GM12878 (cell line): ENCODE measurements at regions of chr16 and their contacts with region 1.

Region 1: DNA sequence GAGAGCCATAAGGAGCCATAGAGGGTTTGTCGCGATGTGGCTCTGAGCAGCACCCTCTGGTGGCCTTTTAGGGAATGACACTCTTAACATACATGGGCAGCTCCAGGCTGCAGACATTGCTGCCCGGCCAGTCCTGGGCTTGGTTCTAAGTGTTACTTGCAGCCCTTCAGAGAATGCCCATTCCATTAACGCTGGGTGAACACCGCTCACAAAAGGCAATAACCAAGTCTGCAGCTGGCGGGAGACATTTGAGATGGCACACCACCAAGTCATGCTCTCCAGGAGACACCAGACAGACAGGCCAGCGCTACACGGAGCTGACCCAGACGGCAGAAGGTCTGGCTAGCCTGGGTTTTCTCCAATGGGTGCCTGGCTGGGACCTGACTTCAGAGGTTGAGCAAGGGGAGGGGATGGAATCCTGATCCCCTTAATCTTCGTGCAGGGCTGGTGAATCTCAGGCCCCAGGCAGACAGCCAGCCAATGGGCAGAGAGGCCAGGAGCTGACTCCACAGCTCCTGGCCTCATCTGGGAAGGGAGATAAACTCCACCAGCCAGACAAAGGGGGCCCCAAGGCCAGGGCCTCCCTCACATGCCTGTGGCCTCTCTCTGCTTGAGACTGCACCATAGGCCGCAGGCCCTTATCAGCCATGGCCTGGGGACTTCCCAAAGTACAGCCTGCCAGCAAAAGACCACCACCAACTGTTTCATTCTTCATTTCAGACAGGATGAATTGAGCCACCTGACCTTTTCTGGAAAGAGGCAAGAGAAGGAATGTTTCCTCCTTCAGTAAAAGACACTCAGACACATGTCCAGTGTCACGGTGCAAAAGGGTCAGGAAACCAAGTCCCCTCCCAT is 58.8 kb downstream of the ZDHHC7 start:
- DNase-seq: peak; percentile 40
- ATAC-seq: peak; percentile 94
- H3K4me3 ChIP-seq: no peak overlapping the region
- H3K27ac ChIP-seq: no peak overlapping the region
- H3K4me1 ChIP-seq: peaks cover 4% of the 10 kb centered on the region; the same call in 1 of the 2 replicates
- H3K27me3 ChIP-seq: no peaks in the 10 kb centered on the region; a peak in 1 of 4 replicates
- CTCF ChIP-seq: peak; percentile 85
- EP300 ChIP-seq: no peak
- POLR2A ChIP-seq: no peak
- RAD21 ChIP-seq: peak; percentile 58

Region 2: GRCh38 chr16:84647828-84648594 is 304.6 kb before region 1 on chr16 and contains the start of gene KLHL36:
- CTCF ChIA-PET with region 1: no interaction called
- POLR2A ChIA-PET with region 1: no interaction called
- RAD21 ChIA-PET with region 1: no interaction called
- SMC1A ChIA-PET with region 1: no interaction called
- in situ Hi-C with region 1: loop called (anchors 25 kb)
- intact Hi-C with region 1: no loop called
- DNase-seq: no peak
- ATAC-seq: peak; percentile 84
- H3K4me3 ChIP-seq: peak within 1 kb of the TSS; percentile 81
- H3K27ac ChIP-seq: peak within 1 kb of the TSS; percentile 79
- H3K4me1 ChIP-seq: peaks cover 21% of the 10 kb centered on the region
- H3K27me3 ChIP-seq: no peaks in the 10 kb centered on the region
- CTCF ChIP-seq: peak in 2 of 3 experiments; percentile 3 to 9; a peak in 1 of 6 replicates
- EP300 ChIP-seq: no peak
- POLR2A ChIP-seq: peak; percentile 68
- RAD21 ChIP-seq: no peak
- polyA plus RNA-seq, gene KLHL36: 2.6 to 2.7 TPM

Region 3: GRCh38 chr16:84864326-84864955 is 88.1 kb before region 1 on chr16:
- CTCF ChIA-PET with region 1: interaction called, 10 read pairs
- POLR2A ChIA-PET with region 1: no interaction called
- RAD21 ChIA-PET with region 1: interaction called, 5 read pairs
- SMC1A ChIA-PET with region 1: no interaction called
- in situ Hi-C with region 1: no loop called
- intact Hi-C with region 1: no loop called
- DNase-seq: no peak
- ATAC-seq: peak; percentile 37
- H3K4me3 ChIP-seq: no peak overlapping the region
- H3K27ac ChIP-seq: no peak overlapping the region
- H3K4me1 ChIP-seq: no peaks in the 10 kb centered on the region
- H3K27me3 ChIP-seq: peaks cover 0 to 5% of the 10 kb centered on the region in 2 experiments; a peak in 2 of 4 replicates
- CTCF ChIP-seq: no peak
- EP300 ChIP-seq: no peak
- POLR2A ChIP-seq: no peak
- RAD21 ChIP-seq: no peak

Region 4: GRCh38 chr16:84925092-84925772 is 27.3 kb before region 1 on chr16:
- CTCF ChIA-PET with region 1: interaction called, 53 read pairs
- POLR2A ChIA-PET with region 1: no interaction called
- RAD21 ChIA-PET with region 1: interaction called, 3 read pairs
- SMC1A ChIA-PET with region 1: interaction called, 27 read pairs
- in situ Hi-C with region 1: no loop called
- intact Hi-C with region 1: loop called (anchors 2 kb)
- DNase-seq: no peak
- ATAC-seq: peak; percentile 90
- H3K4me3 ChIP-seq: no peak overlapping the region
- H3K27ac ChIP-seq: no peak overlapping the region
- H3K4me1 ChIP-seq: no peaks in the 10 kb centered on the region
- H3K27me3 ChIP-seq: no peaks in the 10 kb centered on the region
- CTCF ChIP-seq: peak; percentile 73 to 84 (median 73)
- EP300 ChIP-seq: no peak
- POLR2A ChIP-seq: no peak
- RAD21 ChIP-seq: peak; percentile 71